SK-N-SH (cell line): ENCODE measurements at regions of chr11 and their contacts with region 1.

Region 1: DNA sequence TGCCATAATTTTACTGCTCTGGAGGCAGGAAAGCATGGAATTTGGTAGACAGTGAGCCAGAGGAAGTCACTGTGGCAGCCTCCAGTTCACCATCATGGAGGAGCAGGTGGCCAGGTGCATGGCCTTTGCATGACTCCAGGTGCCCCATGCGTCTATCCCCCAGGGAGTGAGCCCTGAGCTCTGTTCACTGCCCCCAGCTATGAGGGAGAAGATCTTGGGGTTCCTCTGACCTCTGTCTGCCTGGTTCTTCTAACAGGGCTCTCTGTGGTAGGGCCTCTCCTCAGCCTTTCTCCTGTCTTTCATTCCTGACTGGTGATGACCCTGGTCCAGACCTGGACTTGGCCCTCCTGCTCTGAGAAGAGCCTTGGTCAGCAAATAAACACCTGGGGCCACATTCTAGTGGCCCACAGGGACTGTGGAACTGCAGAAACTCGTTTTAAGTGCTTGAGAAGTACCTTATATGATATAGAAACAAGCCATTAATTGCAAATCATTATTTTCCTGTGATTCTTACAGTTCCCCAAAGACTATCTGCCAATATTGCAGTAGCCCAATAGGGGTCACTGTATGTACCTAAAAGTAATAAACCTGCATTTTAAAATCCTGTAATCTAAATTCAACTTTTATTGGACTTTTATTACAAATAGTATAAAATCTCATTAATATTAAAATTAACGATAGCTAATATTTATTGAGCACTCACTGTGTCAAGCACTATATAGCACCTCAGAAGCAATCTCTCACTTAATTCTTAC is 120.0 kb upstream of the SYT13 start:
- DNase-seq: no peak
- H3K4me3 ChIP-seq: no peak overlapping the region
- H3K27ac ChIP-seq: no peak overlapping the region
- H3K4me1 ChIP-seq: peaks cover 11 to 14% of the 10 kb centered on the region in 2 experiments; a peak in 3 of 4 replicates
- H3K27me3 ChIP-seq: no peaks in the 10 kb centered on the region
- CTCF ChIP-seq: peak; percentile 73
- EP300 ChIP-seq: no peak
- RAD21 ChIP-seq: peak; percentile 68

Region 2: DNA sequence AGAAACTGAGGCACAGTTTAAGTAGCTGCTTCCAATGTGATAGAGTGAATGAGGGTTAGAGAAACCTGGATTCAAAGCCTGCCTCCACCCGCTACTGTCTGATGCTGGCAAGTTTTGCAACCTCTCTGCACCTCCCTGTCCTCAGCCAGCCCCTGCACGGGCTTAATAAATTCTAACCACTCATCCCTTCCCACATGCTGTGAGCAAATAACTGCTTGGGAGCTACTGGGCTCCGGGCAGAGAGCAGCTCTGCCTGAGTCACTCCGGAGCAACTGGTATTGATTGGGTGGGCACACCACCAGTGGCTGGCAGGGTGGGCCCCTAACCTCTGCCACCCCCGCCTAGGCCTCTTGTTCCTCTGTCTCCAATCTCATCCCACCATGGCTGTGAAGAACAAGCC is 15.7 kb before region 1 on chr11:
- CTCF ChIA-PET with region 1: interaction called, 14 read pairs
- POLR2A ChIA-PET with region 1: no interaction called
- DNase-seq: no peak
- H3K4me3 ChIP-seq: no peak overlapping the region
- H3K27ac ChIP-seq: no peak overlapping the region
- H3K4me1 ChIP-seq: peaks cover 8% of the 10 kb centered on the region in 2 experiments; a peak in 1 of 4 replicates
- H3K27me3 ChIP-seq: no peaks in the 10 kb centered on the region
- CTCF ChIP-seq: no peak
- EP300 ChIP-seq: no peak
- RAD21 ChIP-seq: no peak